A673 (cell line): ENCODE measurements at regions of chr13 and their contacts with region 1.

Region 1: GRCh38 chr13:109897988-109898624 is 111.7 kb upstream of the IRS2 start:
- DNase-seq: no peak
- H3K4me3 ChIP-seq: no peak overlapping the region
- H3K27ac ChIP-seq: no peak overlapping the region
- H3K4me1 ChIP-seq: no peaks in the 10 kb centered on the region
- H3K27me3 ChIP-seq: no peaks in the 10 kb centered on the region
- CTCF ChIP-seq: no peak

Region 2: GRCh38 chr13:109326601-109327000 is 571.5 kb before region 1 on chr13:
- CTCF ChIA-PET with region 1: no interaction called
- POLR2A ChIA-PET with region 1: interaction called, 15 read pairs
- intact Hi-C with region 1: no loop called
- DNase-seq: no peak
- H3K4me3 ChIP-seq: no peak overlapping the region
- H3K27ac ChIP-seq: no peak overlapping the region
- H3K4me1 ChIP-seq: no peaks in the 10 kb centered on the region
- H3K27me3 ChIP-seq: no peaks in the 10 kb centered on the region
- CTCF ChIP-seq: no peak

Region 3: GRCh38 chr13:109646423-109646822 is 251.7 kb before region 1 on chr13:
- CTCF ChIA-PET with region 1: no interaction called
- POLR2A ChIA-PET with region 1: no interaction called
- intact Hi-C with region 1: no loop called
- DNase-seq: no peak
- H3K4me3 ChIP-seq: no peak overlapping the region
- H3K27ac ChIP-seq: peak overlapping the region; percentile 64
- H3K4me1 ChIP-seq: peaks cover 23% of the 10 kb centered on the region
- H3K27me3 ChIP-seq: no peaks in the 10 kb centered on the region
- CTCF ChIP-seq: no peak